T-cell (primary cell): ENCODE measurements at regions of chr2 and their contacts with region 1.

Region 1: DNA sequence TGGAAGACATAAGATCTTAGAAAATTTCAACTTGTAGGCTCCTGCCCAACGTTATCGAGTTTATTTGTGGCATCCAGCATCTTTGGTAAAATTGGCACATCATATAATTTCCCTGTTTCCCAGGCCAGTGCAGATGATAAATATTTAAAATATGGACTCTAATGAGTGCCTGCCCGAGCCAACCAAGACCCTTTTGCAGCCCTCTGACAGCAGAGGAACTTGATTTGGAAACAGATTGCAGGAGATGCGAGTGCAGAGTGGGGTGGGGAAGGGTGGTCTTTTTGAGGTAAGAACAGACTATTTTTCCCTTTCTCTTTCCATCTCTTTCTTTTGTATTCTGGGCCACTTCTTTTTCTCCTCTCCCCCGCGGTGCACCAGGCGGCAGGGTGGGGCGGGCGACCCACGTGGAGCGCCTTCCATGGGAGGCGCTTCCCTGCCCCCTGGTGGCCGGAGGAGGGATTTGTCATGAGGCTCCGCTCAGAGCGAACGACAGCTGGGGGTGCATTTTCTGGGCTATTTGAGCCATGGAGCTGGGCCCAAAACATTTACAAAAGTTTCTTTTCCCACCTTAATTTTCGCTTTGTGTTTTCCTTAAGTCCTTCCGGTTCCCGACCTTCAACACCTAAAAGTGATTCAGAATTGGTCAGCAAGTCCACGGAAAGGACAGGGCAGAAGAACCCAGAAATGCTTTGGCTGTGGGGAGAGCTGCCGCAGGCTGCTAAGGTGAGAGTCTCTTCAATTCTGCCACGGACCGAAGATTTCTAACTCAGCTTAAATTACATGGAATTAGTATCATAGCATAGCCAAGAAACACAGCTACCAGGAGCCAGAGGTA is 32.7 kb downstream of the LPIN1 start:
- DNase-seq: peak; percentile 62 to 92 (median 83)
- ATAC-seq: peak; percentile 91 to 93 (median 92)
- H3K4me3 ChIP-seq: no peak overlapping the region
- H3K4me3 Mint-ChIP-seq: peak overlapping the region; percentile 57 to 68 (median 63)
- H3K27ac ChIP-seq: peak overlapping the region; percentile 52
- H3K27ac Mint-ChIP-seq: peak overlapping the region; percentile 90 to 91
- H3K4me1 ChIP-seq: peaks cover 6 to 28% of the 10 kb centered on the region in 2 experiments
- H3K4me1 Mint-ChIP-seq: peaks cover 41 to 47% (median 43%) of the 10 kb centered on the region in 3 donors
- H3K27me3 ChIP-seq: no peaks in the 10 kb centered on the region
- H3K27me3 Mint-ChIP-seq: no peaks in the 10 kb centered on the region

Region 2: DNA sequence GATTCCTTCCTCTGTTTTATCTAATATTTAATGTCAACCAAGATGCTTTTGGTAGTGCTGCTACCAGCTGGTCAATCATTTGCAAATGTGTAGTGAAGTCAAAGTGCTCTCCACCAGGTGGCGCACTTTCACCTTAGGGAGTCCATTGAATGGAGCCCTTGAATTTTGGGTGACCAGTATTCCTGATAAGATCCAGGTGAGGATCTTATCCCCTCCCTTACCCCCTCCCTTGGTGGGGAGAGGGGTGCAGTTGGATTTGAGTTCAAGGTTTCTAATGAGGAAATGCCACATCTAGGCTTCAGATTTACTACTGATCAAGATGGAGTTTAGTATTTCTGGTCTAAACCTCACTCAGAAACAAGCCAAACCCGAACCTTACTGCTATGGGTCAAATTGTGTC is 301.1 kb before region 1 on chr2:
- CTCF ChIA-PET with region 1: interaction called in 1 of 2 experiments, 10 read pairs
- POLR2A ChIA-PET with region 1: no interaction called
- DNase-seq: peak; percentile 42 to 88 (median 69)
- ATAC-seq: peak; percentile 57 to 70 (median 64)
- H3K4me3 ChIP-seq: no peak overlapping the region
- H3K4me3 Mint-ChIP-seq: no peak overlapping the region
- H3K27ac ChIP-seq: no peak overlapping the region
- H3K27ac Mint-ChIP-seq: no peak overlapping the region
- H3K4me1 ChIP-seq: peaks cover 0 to 8% of the 10 kb centered on the region in 2 experiments
- H3K4me1 Mint-ChIP-seq: peaks cover 1 to 5% (median 4%) of the 10 kb centered on the region in 3 donors
- H3K27me3 ChIP-seq: peaks cover 0 to 24% of the 10 kb centered on the region in 2 experiments
- H3K27me3 Mint-ChIP-seq: peaks cover 28 to 37% of the 10 kb centered on the region in 2 donors

Region 3: GRCh38 chr2:11738589-11739436 is 40.3 kb before region 1 on chr2:
- CTCF ChIA-PET with region 1: interaction called, 13 to 19 read pairs
- POLR2A ChIA-PET with region 1: interaction called in 1 of 2 experiments, 13 read pairs
- DNase-seq: peak in 6 of 35 experiments; percentile 9 to 62 (median 28)
- ATAC-seq: peak in 3 of 4 experiments; percentile 58 to 76 (median 74)
- H3K4me3 ChIP-seq: no peak overlapping the region
- H3K4me3 Mint-ChIP-seq: no peak overlapping the region
- H3K27ac ChIP-seq: no peak overlapping the region
- H3K27ac Mint-ChIP-seq: peak overlapping the region in 1 of 2 donors; percentile 28
- H3K4me1 ChIP-seq: peaks cover 0 to 13% of the 10 kb centered on the region in 2 experiments
- H3K4me1 Mint-ChIP-seq: peaks cover 2 to 23% (median 9%) of the 10 kb centered on the region in 3 donors
- H3K27me3 ChIP-seq: peaks cover 0 to 6% of the 10 kb centered on the region in 2 experiments
- H3K27me3 Mint-ChIP-seq: peaks cover 6% of the 10 kb centered on the region in 2 donors

Region 4: GRCh38 chr2:11743846-11744553 is 35.1 kb before region 1 on chr2:
- CTCF ChIA-PET with region 1: interaction called, 13 to 19 read pairs
- POLR2A ChIA-PET with region 1: interaction called, 7 to 13 read pairs
- DNase-seq: peak in 29 of 35 experiments; percentile 22 to 79 (median 45)
- ATAC-seq: peak; percentile 11 to 33 (median 23)
- H3K4me3 ChIP-seq: peak overlapping the region in 1 of 2 donors; percentile 22
- H3K4me3 Mint-ChIP-seq: peak overlapping the region; percentile 62 to 78 (median 66)
- H3K27ac ChIP-seq: peak overlapping the region; percentile 25
- H3K27ac Mint-ChIP-seq: peak overlapping the region; percentile 90 to 95
- H3K4me1 ChIP-seq: peaks cover 17 to 55% of the 10 kb centered on the region in 2 experiments
- H3K4me1 Mint-ChIP-seq: peaks cover 35 to 54% (median 47%) of the 10 kb centered on the region in 3 donors
- H3K27me3 ChIP-seq: peaks cover 0 to 3% of the 10 kb centered on the region in 2 experiments
- H3K27me3 Mint-ChIP-seq: no peaks in the 10 kb centered on the region

Region 5: GRCh38 chr2:11753886-11754699 is 25.0 kb before region 1 on chr2:
- CTCF ChIA-PET with region 1: interaction called, 8 to 36 read pairs
- POLR2A ChIA-PET with region 1: interaction called, 6 to 16 read pairs
- DNase-seq: peak in 26 of 35 experiments; percentile 21 to 71 (median 46)
- ATAC-seq: peak; percentile 49 to 84 (median 78)
- H3K4me3 ChIP-seq: peak overlapping the region; percentile 41 to 57
- H3K4me3 Mint-ChIP-seq: peak overlapping the region; percentile 68 to 83 (median 77)
- H3K27ac ChIP-seq: peak overlapping the region; percentile 89
- H3K27ac Mint-ChIP-seq: peak overlapping the region; percentile 86 to 93
- H3K4me1 ChIP-seq: peaks cover 28 to 79% of the 10 kb centered on the region in 2 experiments
- H3K4me1 Mint-ChIP-seq: peaks cover 79 to 94% (median 94%) of the 10 kb centered on the region in 3 donors
- H3K27me3 ChIP-seq: no peaks in the 10 kb centered on the region
- H3K27me3 Mint-ChIP-seq: no peaks in the 10 kb centered on the region